Esophagus muscularis mucosa (tissue), 4 donors: ENCODE measurements at regions of chr10 and their contacts with region 1.

Region 1: DNA sequence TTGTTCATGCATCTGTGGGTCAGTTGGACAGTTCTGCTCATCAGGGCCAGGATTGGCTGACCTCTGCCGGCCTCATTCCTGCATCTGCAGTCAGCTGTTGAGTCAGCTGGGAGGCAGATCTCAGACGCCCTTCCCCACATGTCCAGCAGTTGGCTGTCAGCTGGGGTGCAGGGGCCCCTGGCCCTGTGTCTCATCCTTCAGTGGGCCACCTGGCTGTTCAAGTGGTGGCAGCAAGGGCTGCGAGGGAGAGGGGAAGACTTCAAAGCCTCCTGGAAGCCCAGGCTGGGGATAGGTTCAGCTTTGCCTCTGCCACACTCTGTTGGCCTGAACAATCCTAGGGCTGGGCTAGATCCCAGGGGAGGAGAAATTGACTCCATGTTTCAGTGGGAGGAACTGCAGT is 33.2 kb downstream of the TACR2 start:
- DNase-seq: no peak
- H3K4me3 ChIP-seq: no peak overlapping the region
- H3K27ac ChIP-seq: peak overlapping the region; percentile 7 to 54 (median 33)
- H3K4me1 ChIP-seq: peaks cover 9 to 22% (median 18%) of the 10 kb centered on the region in 4 donors
- H3K27me3 ChIP-seq: no peaks in the 10 kb centered on the region
- CTCF ChIP-seq: peak in 1 of 3 experiments; percentile 7
- EP300 ChIP-seq: no peak
- POLR2A ChIP-seq: no peak

Region 2: DNA sequence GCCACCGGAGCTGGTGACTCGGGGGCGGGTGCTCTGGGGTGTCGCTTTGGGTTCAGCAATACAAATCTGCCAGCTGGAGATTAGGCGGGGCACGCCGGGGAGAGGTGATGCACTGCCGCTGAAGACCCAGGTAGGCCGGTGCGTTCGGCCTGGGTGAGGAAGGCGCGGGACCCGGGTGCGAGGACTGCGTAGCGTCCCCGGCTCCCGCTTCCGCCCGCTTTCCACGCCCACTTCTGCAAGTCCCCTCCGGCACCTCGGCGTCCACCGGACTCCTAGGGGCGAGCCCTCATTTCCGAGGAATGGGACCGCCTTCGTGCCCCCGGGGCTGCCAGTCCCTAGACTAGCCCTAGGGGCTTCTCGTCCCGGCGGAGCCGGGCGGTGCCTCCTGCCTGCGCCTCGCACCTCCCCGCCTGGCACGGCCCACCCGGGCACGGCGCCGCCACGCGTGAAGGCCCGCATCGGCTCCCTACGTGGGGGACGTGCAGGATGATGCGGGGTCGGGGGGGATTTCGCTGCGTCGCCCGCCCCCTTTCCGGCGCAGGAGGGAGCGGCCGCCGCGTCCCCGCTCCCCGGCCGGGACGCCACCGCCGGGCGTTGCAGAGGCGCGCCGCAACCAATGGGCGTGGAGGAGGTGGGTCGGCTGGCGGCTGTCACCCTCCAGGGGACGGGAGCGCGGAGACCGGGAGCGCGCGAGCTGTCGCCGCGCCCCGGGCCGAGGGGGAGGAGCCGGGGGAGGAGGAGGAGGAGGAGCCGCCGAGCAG is 65.3 kb before region 1 on chr10:
- intact Hi-C with region 1: loop called (anchors 5 kb)
- DNase-seq: peak; percentile 96
- H3K4me3 ChIP-seq: peak overlapping the region; percentile 78 to 99 (median 89)
- H3K27ac ChIP-seq: peak overlapping the region; percentile 88 to 98 (median 96)
- H3K4me1 ChIP-seq: peaks cover 38 to 60% (median 48%) of the 10 kb centered on the region in 4 donors
- H3K27me3 ChIP-seq: peaks cover 0 to 3% (median 0%) of the 10 kb centered on the region in 4 donors
- CTCF ChIP-seq: peak in 1 of 3 experiments; percentile 8
- EP300 ChIP-seq: no peak
- POLR2A ChIP-seq: no peak

Region 3: GRCh38 chr10:69439813-69440506 is 56.4 kb after region 1 on chr10:
- intact Hi-C with region 1: no loop called
- DNase-seq: no peak
- H3K4me3 ChIP-seq: no peak overlapping the region
- H3K27ac ChIP-seq: peak overlapping the region in 1 of 4 donors; percentile 35
- H3K4me1 ChIP-seq: peaks cover 16 to 20% (median 17%) of the 10 kb centered on the region in 4 donors
- H3K27me3 ChIP-seq: no peaks in the 10 kb centered on the region
- CTCF ChIP-seq: no peak
- EP300 ChIP-seq: no peak
- POLR2A ChIP-seq: no peak

Region 4: GRCh38 chr10:69527961-69528360 is 144.4 kb after region 1 on chr10:
- intact Hi-C with region 1: no loop called
- DNase-seq: peak; percentile 91
- H3K4me3 ChIP-seq: no peak overlapping the region
- H3K27ac ChIP-seq: no peak overlapping the region
- H3K4me1 ChIP-seq: no peaks in the 10 kb centered on the region
- H3K27me3 ChIP-seq: no peaks in the 10 kb centered on the region
- CTCF ChIP-seq: no peak
- EP300 ChIP-seq: no peak
- POLR2A ChIP-seq: no peak